ENCODE measurements at regions of chr6 and their contacts with region 1.

Region 1: DNA sequence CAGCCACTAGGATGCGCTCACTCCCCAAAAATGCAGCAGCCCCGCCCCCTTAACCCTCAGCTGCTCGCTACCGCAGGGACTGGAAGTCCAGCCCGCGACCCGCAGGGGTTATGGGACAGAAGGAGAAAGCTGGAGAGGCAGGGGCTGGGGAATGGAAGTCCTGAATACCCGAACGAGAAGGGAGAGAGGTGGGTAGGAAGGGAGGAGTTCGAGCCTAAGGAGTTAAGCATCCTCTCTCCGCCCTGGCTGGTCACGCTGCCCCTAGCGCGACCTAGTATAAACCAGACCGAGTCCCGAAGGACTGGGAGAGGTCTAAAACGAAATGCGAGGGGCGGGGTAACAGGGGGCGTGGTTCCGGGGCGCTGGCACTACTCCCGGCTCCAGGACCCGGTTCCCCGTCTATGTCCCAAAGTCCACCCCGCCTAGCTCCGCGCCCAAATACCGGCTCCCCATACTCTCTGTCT is 448 bp upstream of the DDAH2 start:
- DNase-seq: peak; percentile 35
- ATAC-seq: peak; percentile 84
- H3K4me3 ChIP-seq: peak overlapping the region; percentile 78
- H3K27ac ChIP-seq: peak overlapping the region; percentile 13; the same call in 1 of the 2 replicates
- H3K4me1 ChIP-seq: peaks cover 33% of the 10 kb centered on the region
- H3K27me3 ChIP-seq: no peaks in the 10 kb centered on the region
- CTCF ChIP-seq: peak in 2 of 3 experiments; percentile 84 to 94; a peak in 3 of 6 replicates
- EP300 ChIP-seq: no peak
- POLR2A ChIP-seq: no peak
- RAD21 ChIP-seq: peak; percentile 90

Region 2: DNA sequence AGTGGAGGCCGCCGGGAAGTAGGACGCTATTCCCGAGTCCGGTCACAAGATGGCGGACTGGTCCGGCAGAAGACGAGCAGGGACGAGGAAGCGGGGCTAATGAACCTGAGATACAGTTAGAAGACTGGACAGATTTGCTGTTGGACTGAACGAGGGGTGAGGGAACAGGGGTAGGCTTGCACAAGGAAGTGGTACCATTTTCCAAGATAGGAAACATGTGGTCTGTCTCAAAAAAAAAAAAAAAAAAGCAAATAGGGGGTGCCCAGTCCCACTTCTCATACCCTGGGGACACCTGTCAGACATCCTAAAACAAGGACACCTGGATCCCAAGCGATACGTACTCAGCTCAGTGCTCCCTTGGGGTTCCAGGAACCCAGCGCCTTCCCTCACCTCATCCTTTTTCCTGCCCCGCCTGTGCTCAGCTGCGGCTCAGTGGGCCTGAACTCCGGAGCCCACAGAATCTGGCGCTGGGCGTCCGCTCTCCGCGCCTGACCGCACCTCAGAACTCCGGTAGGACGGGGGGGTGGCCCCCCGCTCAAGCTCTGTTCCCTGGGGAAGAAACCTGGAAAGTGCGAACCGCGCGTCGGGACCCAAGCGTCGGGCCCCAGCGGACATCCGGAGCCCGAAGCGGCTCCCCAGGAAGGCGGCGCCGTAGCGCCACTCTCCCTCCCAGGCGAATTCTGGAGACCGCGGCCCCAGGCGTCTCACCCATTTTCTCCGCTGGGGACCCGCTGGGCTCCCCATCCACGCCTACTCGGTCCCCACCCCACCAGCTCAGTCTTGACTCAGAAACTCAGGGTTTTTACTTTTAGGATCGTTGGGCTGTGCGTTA is 48.5 kb before region 1 on chr6 and contains the start of gene LY6G5C:
- CTCF ChIA-PET with region 1: interaction called, 6 read pairs
- POLR2A ChIA-PET with region 1: no interaction called
- RAD21 ChIA-PET with region 1: interaction called, 3 read pairs
- SMC1A ChIA-PET with region 1: interaction called, 3 read pairs
- in situ Hi-C with region 1: no loop called
- intact Hi-C with region 1: loop called (anchors 5 kb)
- DNase-seq: no peak
- ATAC-seq: peak; percentile 83
- H3K4me3 ChIP-seq: peak within 1 kb of the TSS; percentile 71
- H3K27ac ChIP-seq: peak within 1 kb of the TSS; percentile 15; the same call in 1 of the 2 replicates
- H3K4me1 ChIP-seq: peaks cover 6% of the 10 kb centered on the region
- H3K27me3 ChIP-seq: no peaks in the 10 kb centered on the region
- CTCF ChIP-seq: peak; percentile 74 to 91 (median 75)
- EP300 ChIP-seq: no peak
- POLR2A ChIP-seq: no peak
- RAD21 ChIP-seq: peak; percentile 93
- polyA plus RNA-seq, gene LY6G5C: 0.87 to 1.2 TPM

Region 3: DNA sequence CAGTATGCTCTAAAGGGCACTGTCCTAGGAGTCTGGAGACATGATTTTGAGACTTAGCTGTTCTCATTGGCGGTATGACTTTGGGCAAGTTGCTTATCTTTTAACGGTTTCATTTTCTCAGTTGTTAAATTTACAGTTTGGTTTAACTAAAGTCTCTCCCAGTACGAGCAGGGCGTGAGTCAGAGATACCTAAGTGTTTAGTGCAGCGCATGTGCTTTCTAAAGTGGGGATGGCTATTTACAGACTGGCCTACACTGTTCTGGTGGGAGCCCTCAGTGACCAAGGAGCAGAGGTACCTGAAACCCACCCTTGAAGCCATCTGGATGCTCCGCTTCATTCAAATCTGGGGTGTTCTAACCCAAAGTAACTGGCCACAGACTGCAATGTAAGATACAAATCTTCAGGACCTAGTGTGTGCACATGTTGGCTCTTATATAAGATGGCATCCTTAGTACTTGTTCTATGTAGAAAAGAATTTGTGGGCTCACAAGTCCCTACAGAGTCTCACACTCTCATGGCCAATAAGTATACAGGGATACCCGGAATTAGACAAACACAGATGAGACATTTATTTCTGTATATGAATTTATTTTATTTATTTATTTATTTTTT is 21.0 kb after region 1 on chr6:
- CTCF ChIA-PET with region 1: no interaction called
- POLR2A ChIA-PET with region 1: no interaction called
- RAD21 ChIA-PET with region 1: no interaction called
- SMC1A ChIA-PET with region 1: no interaction called
- in situ Hi-C with region 1: no loop called
- intact Hi-C with region 1: no loop called
- DNase-seq: no peak
- ATAC-seq: no peak
- H3K4me3 ChIP-seq: no peak overlapping the region
- H3K27ac ChIP-seq: no peak overlapping the region
- H3K4me1 ChIP-seq: no peaks in the 10 kb centered on the region
- H3K27me3 ChIP-seq: no peaks in the 10 kb centered on the region
- CTCF ChIP-seq: no peak
- EP300 ChIP-seq: no peak
- POLR2A ChIP-seq: no peak
- RAD21 ChIP-seq: no peak

Region 4: DNA sequence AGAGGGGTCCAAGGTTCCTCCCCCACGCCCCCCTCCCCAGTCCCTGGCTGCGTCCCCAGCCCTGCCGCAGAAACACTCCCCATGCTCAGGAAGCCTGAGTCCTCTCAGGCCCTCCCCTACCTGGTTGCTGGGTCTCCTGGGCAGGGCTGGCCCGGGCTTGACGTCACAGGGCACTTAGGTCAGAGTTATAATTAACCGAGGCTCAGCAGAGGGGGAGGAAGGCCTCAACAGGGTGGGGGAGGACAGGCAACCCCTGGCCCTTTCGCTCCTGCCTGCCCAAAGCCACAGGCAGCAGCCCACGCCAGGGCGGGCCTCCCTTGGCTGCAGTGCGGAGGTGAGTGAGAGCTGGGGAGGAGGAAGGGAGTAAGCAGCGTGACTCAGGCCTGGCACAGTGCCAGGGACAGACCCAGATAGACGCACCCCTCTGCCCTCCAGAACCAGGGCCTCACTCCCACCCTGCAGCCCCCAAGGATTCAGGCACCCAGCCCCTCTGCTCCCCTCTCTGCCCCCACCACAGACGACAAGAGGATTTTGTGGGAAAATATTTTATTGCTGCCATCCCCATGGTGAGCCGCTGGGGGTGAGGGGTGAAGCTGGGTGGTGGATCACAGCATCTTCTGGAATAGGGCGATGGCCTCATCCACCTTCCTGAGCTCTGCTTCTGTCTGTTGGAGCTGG is 47.6 kb after region 1 on chr6 and contains the start of gene VWA7:
- CTCF ChIA-PET with region 1: interaction called, 208 read pairs
- POLR2A ChIA-PET with region 1: interaction called, 6 read pairs
- RAD21 ChIA-PET with region 1: interaction called, 44 read pairs
- SMC1A ChIA-PET with region 1: interaction called, 41 read pairs
- in situ Hi-C with region 1: no loop called
- intact Hi-C with region 1: loop called (anchors 1 kb)
- DNase-seq: peak; percentile 70
- ATAC-seq: peak; percentile 95
- H3K4me3 ChIP-seq: no peak within 1 kb of the TSS
- H3K27ac ChIP-seq: peak within 1 kb of the TSS; percentile 37; the same call in 1 of the 2 replicates
- H3K4me1 ChIP-seq: peaks cover 18% of the 10 kb centered on the region
- H3K27me3 ChIP-seq: no peaks in the 10 kb centered on the region
- CTCF ChIP-seq: no peak
- EP300 ChIP-seq: peak; percentile 33 to 39; a peak in 2 of 4 replicates
- POLR2A ChIP-seq: peak; percentile 72
- RAD21 ChIP-seq: no peak
- polyA plus RNA-seq, gene VWA7: 0.11 TPM in 1 of 2 experiments, not detected in the other

Region 5: GRCh38 chr6:31815025-31815838 is 85.7 kb after region 1 on chr6 and contains the starts of genes HSPA1A and HSPA1L:
- CTCF ChIA-PET with region 1: interaction called, 6 read pairs
- POLR2A ChIA-PET with region 1: interaction called, 158 read pairs
- RAD21 ChIA-PET with region 1: interaction called, 10 read pairs
- SMC1A ChIA-PET with region 1: interaction called, 5 read pairs
- in situ Hi-C with region 1: no loop called
- intact Hi-C with region 1: no loop called
- DNase-seq: no peak
- ATAC-seq: peak; percentile 58
- H3K4me3 ChIP-seq: peak within 1 kb of the TSS; percentile 94
- H3K27ac ChIP-seq: peak within 1 kb of the TSS; percentile 58
- H3K4me1 ChIP-seq: peaks cover 29% of the 10 kb centered on the region
- H3K27me3 ChIP-seq: no peaks in the 10 kb centered on the region
- CTCF ChIP-seq: no peak
- EP300 ChIP-seq: 0 out of 4 replicates have a peak, but pooled peaks of 1 of the 2 experiments have one; percentile 30
- POLR2A ChIP-seq: peak; percentile 81
- RAD21 ChIP-seq: no peak
- polyA plus RNA-seq, gene HSPA1A: 0.29 to 1.3 TPM
- polyA plus RNA-seq, gene HSPA1L: 0.69 TPM

Region 6: DNA sequence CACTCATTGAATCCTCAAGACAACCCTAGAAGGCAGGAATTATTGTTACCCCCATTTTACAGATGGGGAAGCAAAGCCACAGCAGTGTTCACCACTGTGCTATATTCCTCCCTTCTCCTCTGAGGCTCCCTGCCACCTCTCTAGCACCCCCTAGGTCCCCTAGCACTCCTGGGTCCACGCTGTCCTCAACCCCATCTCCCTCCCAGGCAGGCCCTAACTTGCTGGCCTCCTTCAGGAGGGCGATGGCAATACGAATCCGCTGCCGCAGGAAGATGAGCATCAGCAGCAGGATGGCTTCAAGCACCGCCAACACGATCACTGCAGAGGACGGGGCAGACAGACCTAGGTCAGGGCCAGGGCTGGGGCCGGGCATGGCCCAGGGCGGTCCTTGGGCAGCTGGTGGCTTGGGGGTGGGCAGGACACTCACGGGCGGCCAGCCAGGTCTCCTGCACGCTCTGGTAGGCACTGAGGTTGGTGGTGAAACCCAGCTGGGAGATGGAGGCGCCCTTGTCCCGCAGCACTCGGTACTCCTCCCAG is 140.9 kb after region 1 on chr6:
- CTCF ChIA-PET with region 1: no interaction called
- POLR2A ChIA-PET with region 1: no interaction called
- RAD21 ChIA-PET with region 1: no interaction called
- SMC1A ChIA-PET with region 1: no interaction called
- in situ Hi-C with region 1: no loop called
- intact Hi-C with region 1: no loop called
- DNase-seq: no peak
- ATAC-seq: peak; percentile 42; the same call in 1 of the 3 replicates
- H3K4me3 ChIP-seq: no peak overlapping the region
- H3K27ac ChIP-seq: no peak overlapping the region
- H3K4me1 ChIP-seq: no peaks in the 10 kb centered on the region
- H3K27me3 ChIP-seq: no peaks in the 10 kb centered on the region
- CTCF ChIP-seq: peak in 2 of 3 experiments; percentile 6 to 22; a peak in 2 of 6 replicates
- EP300 ChIP-seq: no peak
- POLR2A ChIP-seq: no peak
- RAD21 ChIP-seq: no peak

Measured in GM12878 (cell line).